ENCODE measurements at regions of chr4 and their contacts with region 1.

Region 1: GRCh38 chr4:17576932-17577665 is at the start of gene LAP3:
- DNase-seq: peak; percentile 99
- H3K4me3 Mint-ChIP-seq: peak within 1 kb of the TSS; percentile 89
- H3K27ac Mint-ChIP-seq: peak within 1 kb of the TSS; percentile 95
- H3K4me1 Mint-ChIP-seq: peaks cover 24% of the 10 kb centered on the region
- H3K27me3 Mint-ChIP-seq: no peaks in the 10 kb centered on the region
- total RNA-seq, gene LAP3: 109 to 111 TPM

Region 2: DNA sequence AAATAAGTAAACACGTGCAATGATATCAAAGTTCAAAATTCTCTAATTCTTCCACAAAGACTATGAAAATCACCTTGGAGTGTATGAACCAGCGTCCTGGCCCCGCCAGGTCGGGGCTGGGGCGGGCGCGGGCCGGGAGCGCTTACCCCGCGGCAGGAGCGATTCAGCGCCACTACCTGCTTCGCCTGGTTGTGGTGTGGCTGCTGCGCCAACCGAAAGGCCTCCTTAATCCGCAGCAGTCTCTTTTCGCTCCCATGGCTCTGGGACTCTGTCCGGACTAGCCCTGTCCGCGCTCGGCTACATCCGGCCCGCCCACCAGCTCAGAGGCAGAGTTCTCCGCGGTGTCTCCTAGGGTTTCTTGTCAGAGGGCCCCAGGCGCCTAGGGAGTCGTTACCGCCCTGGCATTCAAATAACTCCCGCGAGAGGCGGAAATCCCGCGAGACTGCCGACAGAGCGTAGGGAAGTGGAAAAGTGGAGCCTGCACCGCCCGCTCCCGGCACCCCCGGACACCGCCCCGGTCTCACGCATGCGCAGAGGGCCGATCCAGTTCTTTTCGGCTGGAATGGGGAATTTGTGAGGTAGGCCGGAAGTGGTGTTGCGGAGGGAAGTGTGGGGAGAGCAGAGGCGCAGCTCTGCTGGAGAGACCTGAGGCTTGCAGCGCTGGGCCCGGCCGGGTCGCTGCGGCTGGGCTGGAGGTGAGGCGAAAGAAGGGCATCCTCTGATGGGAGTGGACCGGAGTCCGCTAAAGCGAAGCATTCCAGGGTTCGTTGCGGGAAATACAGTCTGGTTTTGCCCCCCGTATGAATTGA is 1895.7 kb before region 1 on chr4 and contains the start of gene FAM200B:
- CTCF ChIA-PET with region 1: no interaction called
- intact Hi-C with region 1: loop called (anchors 1 kb)
- DNase-seq: peak; percentile 99
- H3K4me3 Mint-ChIP-seq: peak within 1 kb of the TSS; percentile 90
- H3K27ac Mint-ChIP-seq: peak within 1 kb of the TSS; percentile 89
- H3K4me1 Mint-ChIP-seq: peaks cover 39% of the 10 kb centered on the region
- H3K27me3 Mint-ChIP-seq: peaks cover 3% of the 10 kb centered on the region
- total RNA-seq, gene FAM200B: 8.0 to 9.1 TPM

Region 3: DNA sequence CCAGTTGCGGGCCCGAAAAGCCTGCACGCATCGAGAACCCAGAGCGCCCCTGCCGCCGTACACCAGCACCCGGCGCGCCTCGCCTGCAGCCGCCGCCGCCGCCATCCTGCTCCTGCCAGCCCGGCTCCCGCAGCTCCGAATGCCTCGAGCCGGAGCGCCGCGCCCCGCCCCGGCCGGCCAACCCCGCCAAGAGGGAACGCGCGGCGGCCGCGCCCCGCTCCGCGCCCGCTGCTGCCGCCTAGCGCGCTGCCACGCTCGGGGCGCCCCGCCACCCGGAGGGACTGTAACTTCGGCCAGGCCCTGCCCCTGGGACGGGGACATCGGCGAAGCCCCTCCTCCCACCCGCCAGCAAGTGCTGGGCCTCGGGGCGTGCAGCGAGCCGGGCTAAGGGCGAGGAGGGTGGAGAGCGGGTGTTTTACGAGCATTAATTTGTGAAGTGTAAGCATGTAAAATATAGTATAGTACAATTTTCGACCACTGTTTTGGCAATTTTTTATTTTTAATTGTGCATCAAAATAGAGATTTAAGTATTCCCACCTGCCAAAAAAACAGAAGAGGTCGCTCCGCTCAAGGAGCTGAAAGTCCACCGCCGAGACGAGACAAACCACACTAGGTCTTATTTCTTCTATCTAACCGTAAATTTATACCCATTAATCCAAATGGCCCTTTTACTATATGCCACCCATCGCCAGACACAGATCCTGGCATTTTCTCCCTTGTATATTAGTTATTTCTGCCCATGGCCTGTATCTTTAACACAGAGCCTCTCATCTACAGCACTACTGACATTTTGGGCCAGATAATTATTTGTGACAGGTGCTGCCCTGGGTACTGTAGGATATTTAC is 64.9 kb before region 1 on chr4 and contains the start of gene QDPR:
- CTCF ChIA-PET with region 1: no interaction called
- intact Hi-C with region 1: loop called (anchors 1 kb)
- DNase-seq: peak; percentile 76
- H3K4me3 Mint-ChIP-seq: peak within 1 kb of the TSS; percentile 89
- H3K27ac Mint-ChIP-seq: peak within 1 kb of the TSS; percentile 63
- H3K4me1 Mint-ChIP-seq: peaks cover 21% of the 10 kb centered on the region
- H3K27me3 Mint-ChIP-seq: no peaks in the 10 kb centered on the region
- total RNA-seq, gene QDPR: 42.2 to 43.8 TPM

Region 4: GRCh38 chr4:17544205-17544604 is 32.9 kb before region 1 on chr4:
- CTCF ChIA-PET with region 1: interaction called, 17 read pairs
- intact Hi-C with region 1: loop called (anchors 1 kb)
- DNase-seq: no peak
- H3K4me3 Mint-ChIP-seq: no peak overlapping the region
- H3K27ac Mint-ChIP-seq: no peak overlapping the region
- H3K4me1 Mint-ChIP-seq: no peaks in the 10 kb centered on the region
- H3K27me3 Mint-ChIP-seq: peaks cover 6% of the 10 kb centered on the region

Region 5: GRCh38 chr4:17614416-17615299 is 37.6 kb after region 1 on chr4 and contains the start of gene MED28:
- CTCF ChIA-PET with region 1: interaction called, 3 read pairs
- intact Hi-C with region 1: loop called (anchors 1 kb)
- DNase-seq: peak; percentile 98
- H3K4me3 Mint-ChIP-seq: peak within 1 kb of the TSS; percentile 98
- H3K27ac Mint-ChIP-seq: peak within 1 kb of the TSS; percentile 85
- H3K4me1 Mint-ChIP-seq: peaks cover 49% of the 10 kb centered on the region
- H3K27me3 Mint-ChIP-seq: no peaks in the 10 kb centered on the region
- total RNA-seq, gene MED28: 52.3 to 59.5 TPM

Region 6: DNA sequence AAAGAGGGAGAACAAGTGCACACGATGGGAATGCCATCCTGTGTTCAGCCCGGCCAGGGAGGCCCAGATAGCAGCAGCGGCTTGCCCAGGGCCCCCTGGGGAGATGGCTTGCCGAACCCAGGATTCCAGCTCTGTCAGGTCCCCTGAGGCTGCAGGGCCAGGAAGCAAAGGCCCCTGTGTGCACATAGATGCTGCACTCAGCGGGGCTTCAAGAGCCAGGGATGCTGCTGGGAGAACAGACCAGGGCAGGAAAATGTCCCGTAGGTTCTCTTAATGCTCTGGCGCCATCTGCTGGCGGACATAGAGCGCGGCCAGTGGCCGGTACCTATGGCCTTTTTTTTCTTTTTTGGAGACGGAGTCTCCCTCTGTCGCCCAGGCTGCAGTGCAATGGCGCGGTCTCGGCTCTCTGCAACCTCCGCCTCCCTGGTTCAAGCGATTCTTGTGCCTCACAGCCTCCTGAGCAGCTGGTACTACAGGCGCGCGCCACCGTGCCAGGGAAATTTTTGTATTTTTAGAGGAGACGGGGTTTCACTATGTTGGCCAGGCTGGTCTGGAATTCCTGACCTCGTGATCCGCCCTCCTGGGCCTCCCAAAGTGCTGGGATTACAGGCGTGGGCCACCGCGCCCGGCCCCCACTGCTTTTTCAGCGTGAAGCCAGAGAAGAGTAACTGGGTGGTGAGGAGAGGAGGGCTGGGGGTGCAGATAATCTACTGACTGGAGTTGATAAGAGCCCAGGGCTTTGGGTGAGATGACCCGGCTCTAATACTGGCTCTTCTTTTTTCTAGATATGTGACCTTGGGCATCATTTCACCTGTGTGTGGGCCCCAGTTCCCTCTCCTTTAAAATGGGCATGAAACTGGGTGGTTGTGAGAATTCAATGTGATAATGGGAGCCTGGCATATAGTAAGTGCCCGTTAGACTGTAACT is 59.9 kb after region 1 on chr4:
- CTCF ChIA-PET with region 1: interaction called, 4 read pairs
- intact Hi-C with region 1: loop called (anchors 1 kb)
- DNase-seq: peak; percentile 82
- H3K4me3 Mint-ChIP-seq: no peak overlapping the region
- H3K27ac Mint-ChIP-seq: no peak overlapping the region
- H3K4me1 Mint-ChIP-seq: no peaks in the 10 kb centered on the region
- H3K27me3 Mint-ChIP-seq: no peaks in the 10 kb centered on the region

Region 7: DNA sequence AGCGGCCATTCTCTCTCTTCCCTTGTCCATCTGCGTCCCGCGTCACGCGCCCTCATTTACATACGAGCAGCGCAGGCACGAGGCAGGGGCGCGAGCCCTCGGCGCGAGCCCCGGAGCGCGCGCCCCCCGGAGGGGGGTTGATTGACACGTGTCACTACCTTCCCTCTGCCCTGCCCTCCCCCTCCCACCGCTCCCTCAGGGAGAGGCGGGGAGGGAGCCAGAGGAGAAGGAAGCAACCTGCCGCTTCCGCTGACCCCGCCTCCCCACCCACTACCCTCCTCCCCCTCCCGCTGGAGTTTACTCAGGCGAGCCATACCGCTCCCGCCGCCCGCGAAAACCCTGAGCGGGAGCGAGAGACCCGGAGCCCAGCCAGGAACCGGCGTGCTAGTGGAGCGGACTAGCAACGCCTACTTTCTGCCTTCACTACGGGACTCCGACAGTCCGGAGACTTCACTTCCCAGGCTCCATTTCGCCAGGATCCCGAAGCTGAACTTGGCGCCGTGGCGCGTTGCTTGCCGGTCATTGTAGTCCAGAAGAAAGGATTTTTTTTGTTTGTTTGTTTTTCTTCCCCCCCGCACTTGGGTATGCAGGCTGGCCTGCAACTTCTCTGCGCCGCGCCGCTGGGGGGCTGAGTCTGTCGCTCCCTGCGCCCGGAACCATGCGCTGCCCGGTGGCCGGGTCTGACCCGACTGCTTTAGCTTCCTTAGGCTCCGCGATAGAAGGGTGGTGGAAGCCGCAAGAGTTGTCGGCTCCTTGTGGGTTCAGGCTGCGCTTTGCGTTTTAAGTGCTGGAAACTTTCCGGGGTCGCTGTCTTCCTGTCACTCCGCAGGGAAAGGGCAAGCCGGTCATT is 444.8 kb after region 1 on chr4 and contains the start of gene LCORL:
- CTCF ChIA-PET with region 1: no interaction called
- intact Hi-C with region 1: loop called (anchors 1 kb)
- DNase-seq: peak; percentile 89
- H3K4me3 Mint-ChIP-seq: peak within 1 kb of the TSS; percentile 98
- H3K27ac Mint-ChIP-seq: peak within 1 kb of the TSS; percentile 79
- H3K4me1 Mint-ChIP-seq: peaks cover 14% of the 10 kb centered on the region
- H3K27me3 Mint-ChIP-seq: peaks cover 16% of the 10 kb centered on the region
- total RNA-seq, gene LCORL: 8.6 to 9.4 TPM

Measured in activated naive CD4-positive, alpha-beta T cell treated with anti-CD3 and anti-CD28 coated beads for 36 hours (primary cell).